Left ventricle myocardium inferior (tissue), 1 donor: ENCODE measurements at regions of chr11 and their contacts with region 1.

Region 1: GRCh38 chr11:10933455-10934292 is 75.8 kb upstream of the ZBED5 start:
- DNase-seq: peak; percentile 87
- H3K4me3 ChIP-seq: peak overlapping the region; percentile 65
- H3K27ac ChIP-seq: peak overlapping the region; percentile 79
- H3K4me1 ChIP-seq: peaks cover 36% of the 10 kb centered on the region
- H3K27me3 ChIP-seq: no peaks in the 10 kb centered on the region
- CTCF ChIP-seq: peak; percentile 98

Region 2: GRCh38 chr11:11022125-11022730 is 88.6 kb after region 1 on chr11:
- intact Hi-C with region 1: loop called (anchors 5 kb)
- DNase-seq: no peak
- H3K4me3 ChIP-seq: no peak overlapping the region
- H3K27ac ChIP-seq: no peak overlapping the region
- H3K4me1 ChIP-seq: no peaks in the 10 kb centered on the region
- H3K27me3 ChIP-seq: no peaks in the 10 kb centered on the region
- CTCF ChIP-seq: peak; percentile 65